Head of caudate nucleus (tissue), 42 donors: ENCODE measurements at regions of chr13 and their contacts with region 1.

Region 1: DNA sequence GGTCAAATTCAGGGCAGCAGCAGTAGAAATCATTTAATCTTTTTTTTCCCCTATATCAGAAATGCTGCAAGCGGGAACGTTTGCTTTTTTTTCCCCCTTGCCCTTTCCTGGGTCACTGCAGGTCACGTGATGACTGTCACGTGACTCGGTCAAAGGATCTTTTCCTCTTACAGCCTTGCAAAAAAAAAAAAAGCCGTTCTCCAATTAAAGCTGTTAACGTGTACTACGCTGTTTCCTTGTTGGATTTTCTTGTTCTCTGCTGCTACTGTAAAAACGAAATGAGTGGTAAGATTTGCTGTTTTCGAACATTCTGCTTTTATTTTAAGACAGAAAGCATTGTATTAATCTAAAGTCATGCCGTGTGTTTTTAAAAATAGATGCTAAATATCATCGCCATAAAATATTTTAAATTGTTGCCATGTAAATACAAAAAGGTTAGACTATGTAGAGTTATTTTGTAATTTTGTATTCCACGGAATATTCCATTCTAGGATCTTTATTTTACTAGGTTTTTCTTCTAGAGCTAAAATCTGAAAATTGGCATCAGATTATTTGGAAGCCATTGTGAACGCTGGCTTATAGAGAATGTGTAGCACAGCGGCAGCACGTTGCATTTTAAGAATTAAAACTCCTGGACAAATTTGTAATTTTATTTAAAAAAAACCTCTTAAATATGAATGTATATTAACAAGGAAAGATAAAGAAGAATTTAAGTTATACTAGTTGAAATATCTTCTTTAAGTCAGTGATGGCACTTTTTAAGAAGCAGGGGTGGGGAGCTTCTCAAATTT is 109.8 kb upstream of the MLNR start:
- DNase-seq: peak; percentile 64 to 95 (median 87)

Region 2: DNA sequence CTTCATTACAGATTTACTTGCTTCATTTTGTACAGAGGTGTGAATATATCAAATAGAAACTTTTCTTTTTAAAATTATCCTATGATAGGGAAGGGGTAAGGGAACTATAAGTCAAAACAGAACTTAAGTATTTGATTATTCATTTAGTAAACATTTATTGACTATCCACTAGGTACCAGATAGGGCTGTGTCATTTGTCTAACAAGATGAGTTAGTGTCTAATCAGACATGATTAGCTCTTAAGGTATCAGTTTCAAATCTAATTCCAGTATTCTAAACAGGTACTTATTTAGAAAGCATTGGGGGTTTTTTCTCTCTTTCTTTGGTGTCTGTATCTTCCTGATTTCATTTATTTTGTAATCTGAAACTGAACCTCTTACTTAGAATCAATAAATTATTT is 169.6 kb after region 1 on chr13:
- intact Hi-C with region 1: loop called (anchors 10 kb)
- DNase-seq: no peak